Left cardiac atrium (tissue), 4 donors: ENCODE measurements at regions of chr17 and their contacts with region 1.

Region 1: GRCh38 chr17:55852734-55853133 is 101.9 kb downstream of the PCTP start:
- DNase-seq: no peak
- ATAC-seq: no peak

Region 2: DNA sequence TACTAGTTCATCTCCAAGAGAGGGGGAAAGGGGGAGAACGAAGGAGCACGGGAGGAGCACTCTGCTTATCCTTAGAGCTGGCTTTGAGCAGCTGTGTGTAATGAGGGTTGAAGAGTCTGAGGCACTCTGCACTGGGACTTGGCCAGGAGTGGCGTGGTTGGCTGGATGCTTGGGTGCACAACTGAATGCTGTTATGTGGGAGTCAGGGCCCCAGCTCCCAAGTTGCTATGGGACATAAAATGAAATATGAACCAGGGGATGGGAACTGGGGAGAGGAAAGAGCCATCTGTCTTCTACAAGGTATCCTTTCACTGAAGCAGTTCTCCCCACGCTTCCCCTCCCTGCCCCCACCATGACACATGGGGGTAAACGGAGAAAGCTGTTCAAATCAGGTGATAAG is 194.6 kb after region 1 on chr17:
- intact Hi-C with region 1: no loop called
- DNase-seq: no peak
- ATAC-seq: no peak

Region 3: DNA sequence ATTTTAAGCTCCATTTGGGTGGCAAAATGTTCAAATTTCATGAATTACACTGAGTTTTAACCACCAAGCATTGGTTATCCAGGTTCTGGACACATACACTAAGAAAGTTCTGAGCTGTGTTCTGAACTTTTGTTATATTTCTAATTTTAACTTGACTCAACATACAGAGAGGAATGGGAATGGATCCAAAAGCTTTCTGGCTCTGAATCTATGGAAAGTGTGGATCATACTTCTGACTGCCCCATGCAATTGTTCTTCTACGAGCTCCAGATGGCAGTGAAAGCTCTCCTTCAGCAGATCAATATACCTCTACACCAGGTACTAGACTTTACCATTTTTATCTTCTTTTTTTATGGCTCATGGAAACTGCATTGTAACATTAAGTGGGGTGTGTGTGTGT is 627.8 kb after region 1 on chr17:
- intact Hi-C with region 1: loop called in 1 of 2 experiments (anchors 10 kb)
- DNase-seq: no peak
- ATAC-seq: no peak